ENCODE measurements at regions of chr14 and their contacts with region 1.

Region 1: GRCh38 chr14:71666571-71667145 is 265.6 kb upstream of the RGS6 start:
- DNase-seq: no peak
- H3K4me3 ChIP-seq: no peak overlapping the region
- H3K27ac ChIP-seq: no peak overlapping the region
- H3K27me3 ChIP-seq: no peaks in the 10 kb centered on the region
- CTCF ChIP-seq: no peak

Region 2: GRCh38 chr14:71647083-71647784 is 19.4 kb before region 1 on chr14:
- CTCF ChIA-PET with region 1: no interaction called
- POLR2A ChIA-PET with region 1: no interaction called
- DNase-seq: no peak
- H3K4me3 ChIP-seq: no peak overlapping the region
- H3K27ac ChIP-seq: no peak overlapping the region
- H3K27me3 ChIP-seq: no peaks in the 10 kb centered on the region
- CTCF ChIP-seq: no peak

Region 3: DNA sequence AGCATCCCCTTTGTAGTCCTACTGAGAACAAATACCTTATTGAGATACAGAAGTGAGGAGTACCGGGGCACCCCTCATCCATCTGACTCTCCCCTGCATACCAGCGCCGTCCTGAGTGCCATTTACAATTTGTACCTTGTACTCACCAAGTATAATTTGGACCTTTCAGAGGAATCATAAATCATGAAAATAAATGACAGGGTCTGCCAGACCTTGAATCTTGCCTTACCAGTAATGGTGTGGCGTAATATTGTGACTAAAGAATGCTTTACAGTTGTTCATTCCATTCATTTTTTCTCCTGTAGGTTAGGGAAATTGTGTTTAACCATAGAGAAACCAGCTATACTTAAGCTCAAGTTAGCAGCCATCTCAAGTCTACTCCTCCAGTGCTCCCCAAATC is 21.9 kb after region 1 on chr14:
- CTCF ChIA-PET with region 1: interaction called, 13 read pairs
- POLR2A ChIA-PET with region 1: no interaction called
- DNase-seq: no peak
- H3K4me3 ChIP-seq: no peak overlapping the region
- H3K27ac ChIP-seq: no peak overlapping the region
- H3K27me3 ChIP-seq: no peaks in the 10 kb centered on the region
- CTCF ChIP-seq: no peak

Measured in AG04450 (cell line).